Right cardiac atrium (tissue), 5 donors: ENCODE measurements at regions of chr1 and their contacts with region 1.

Region 1: GRCh38 chr1:178031856-178032320 is 62.0 kb upstream of the RASAL2 start:
- DNase-seq: peak; percentile 91 to 95 (median 92)
- ATAC-seq: peak; percentile 88 to 90
- H3K4me3 ChIP-seq: no peak overlapping the region
- H3K27ac ChIP-seq: no peak overlapping the region
- H3K4me1 ChIP-seq: no peaks in the 10 kb centered on the region
- H3K27me3 ChIP-seq: no peaks in the 10 kb centered on the region

Region 2: DNA sequence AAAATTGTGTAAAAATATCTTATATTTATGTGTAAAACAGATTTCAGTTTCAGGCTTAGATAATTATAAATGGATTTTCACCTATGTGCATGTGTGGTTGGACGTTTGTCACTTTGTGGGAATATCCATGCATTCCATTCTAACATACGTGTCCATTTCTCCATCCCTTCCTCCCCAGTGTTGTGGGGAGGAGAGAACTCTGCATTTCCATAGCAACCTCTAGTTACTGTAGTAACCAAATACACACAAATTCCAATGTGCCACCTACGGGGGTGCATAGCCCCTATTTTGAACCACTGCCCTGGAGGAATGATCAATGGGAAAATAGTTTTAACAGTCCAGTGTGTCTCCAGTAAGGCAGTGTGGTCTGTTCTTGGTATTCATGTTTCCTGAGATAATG is 141.1 kb after region 1 on chr1:
- intact Hi-C with region 1: loop called in 2 of 4 experiments (anchors 10 kb)
- DNase-seq: no peak
- ATAC-seq: no peak
- H3K4me3 ChIP-seq: no peak overlapping the region
- H3K27ac ChIP-seq: no peak overlapping the region
- H3K4me1 ChIP-seq: peaks cover 6% of the 10 kb centered on the region
- H3K27me3 ChIP-seq: no peaks in the 10 kb centered on the region

Region 3: GRCh38 chr1:178189814-178190213 is 157.9 kb after region 1 on chr1:
- intact Hi-C with region 1: no loop called
- DNase-seq: peak in 2 of 3 donors; percentile 20 to 56
- ATAC-seq: peak; percentile 64 to 70
- H3K4me3 ChIP-seq: no peak overlapping the region
- H3K27ac ChIP-seq: no peak overlapping the region
- H3K4me1 ChIP-seq: peaks cover 3% of the 10 kb centered on the region
- H3K27me3 ChIP-seq: no peaks in the 10 kb centered on the region